Heart left ventricle (tissue), 16 donors: ENCODE measurements at regions of chr12 and their contacts with region 1.

Region 1: DNA sequence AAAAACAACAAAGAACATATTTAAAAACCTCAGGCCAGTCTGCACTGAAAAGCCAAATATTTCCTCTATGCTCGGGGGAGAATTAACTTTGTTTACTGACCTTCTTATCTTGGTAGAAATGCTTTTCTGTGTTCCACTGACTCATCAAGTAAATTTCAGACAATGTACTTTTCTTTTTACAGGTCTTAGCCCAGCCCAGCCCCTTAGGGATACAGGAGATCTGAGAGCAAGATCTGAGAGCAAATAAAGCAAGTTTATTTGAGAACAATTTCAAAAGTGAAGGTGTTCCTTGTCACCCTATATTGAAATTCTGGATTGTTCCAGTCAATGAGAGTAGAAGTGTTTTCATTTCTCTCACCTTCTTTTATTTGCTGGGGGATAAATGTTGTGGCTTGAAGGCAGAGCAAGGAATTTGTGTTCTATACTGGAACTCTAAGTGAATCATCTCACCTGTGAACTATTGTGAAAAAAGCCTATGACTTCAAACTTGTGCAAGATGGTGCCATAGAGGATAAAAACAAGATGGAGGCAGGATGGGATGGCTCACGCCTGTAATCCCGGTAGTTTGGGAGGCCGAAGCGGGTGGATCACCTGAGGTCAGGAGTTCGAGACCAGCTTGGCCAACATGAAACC is 7.9 kb upstream of the GPRC5A start:
- DNase-seq: no peak
- ATAC-seq: peak in 1 of 4 donors; percentile 14
- H3K4me3 ChIP-seq: no peak overlapping the region
- H3K27ac ChIP-seq: no peak overlapping the region
- H3K4me1 ChIP-seq: no peaks in the 10 kb centered on the region
- H3K27me3 ChIP-seq: peaks cover 0 to 5% (median 0%) of the 10 kb centered on the region in 9 donors
- CTCF ChIP-seq: no peak
- POLR2A ChIP-seq: no peak

Region 2: GRCh38 chr12:12837025-12837872 is 46.2 kb before region 1 on chr12:
- intact Hi-C with region 1: loop called in 2 of 10 experiments (anchors 5 kb)
- DNase-seq: peak in 1 of 5 donors; percentile 38
- ATAC-seq: peak in 3 of 4 donors; percentile 50 to 83 (median 69)
- H3K4me3 ChIP-seq: no peak overlapping the region
- H3K27ac ChIP-seq: no peak overlapping the region
- H3K4me1 ChIP-seq: peaks cover 0 to 4% (median 0%) of the 10 kb centered on the region in 12 donors
- H3K27me3 ChIP-seq: no peaks in the 10 kb centered on the region
- CTCF ChIP-seq: peak in 11 of 12 donors; percentile 28 to 62 (median 45)
- POLR2A ChIP-seq: no peak

Region 3: GRCh38 chr12:12846780-12847474 is 36.6 kb before region 1 on chr12:
- intact Hi-C with region 1: loop called in 3 of 10 experiments (anchors 2 to 5 kb)
- DNase-seq: no peak
- ATAC-seq: no peak
- H3K4me3 ChIP-seq: no peak overlapping the region
- H3K27ac ChIP-seq: no peak overlapping the region
- H3K4me1 ChIP-seq: no peaks in the 10 kb centered on the region
- H3K27me3 ChIP-seq: no peaks in the 10 kb centered on the region
- CTCF ChIP-seq: no peak
- POLR2A ChIP-seq: no peak

Region 4: GRCh38 chr12:13278249-13278787 is 394.8 kb after region 1 on chr12:
- intact Hi-C with region 1: no loop called
- DNase-seq: peak; percentile 57 to 87 (median 71)
- ATAC-seq: peak; percentile 91 to 98 (median 93)
- H3K4me3 ChIP-seq: peak overlapping the region in 2 of 12 donors; percentile 6 to 22
- H3K27ac ChIP-seq: no peak overlapping the region
- H3K4me1 ChIP-seq: peaks cover 0 to 10% (median 5%) of the 10 kb centered on the region in 12 donors
- H3K27me3 ChIP-seq: peaks cover 0 to 33% (median 0%) of the 10 kb centered on the region in 9 donors
- CTCF ChIP-seq: peak; percentile 97 to 99 (median 98)
- POLR2A ChIP-seq: no peak